SK-N-SH (cell line): ENCODE measurements at regions of chr14 and their contacts with region 1.

Region 1: DNA sequence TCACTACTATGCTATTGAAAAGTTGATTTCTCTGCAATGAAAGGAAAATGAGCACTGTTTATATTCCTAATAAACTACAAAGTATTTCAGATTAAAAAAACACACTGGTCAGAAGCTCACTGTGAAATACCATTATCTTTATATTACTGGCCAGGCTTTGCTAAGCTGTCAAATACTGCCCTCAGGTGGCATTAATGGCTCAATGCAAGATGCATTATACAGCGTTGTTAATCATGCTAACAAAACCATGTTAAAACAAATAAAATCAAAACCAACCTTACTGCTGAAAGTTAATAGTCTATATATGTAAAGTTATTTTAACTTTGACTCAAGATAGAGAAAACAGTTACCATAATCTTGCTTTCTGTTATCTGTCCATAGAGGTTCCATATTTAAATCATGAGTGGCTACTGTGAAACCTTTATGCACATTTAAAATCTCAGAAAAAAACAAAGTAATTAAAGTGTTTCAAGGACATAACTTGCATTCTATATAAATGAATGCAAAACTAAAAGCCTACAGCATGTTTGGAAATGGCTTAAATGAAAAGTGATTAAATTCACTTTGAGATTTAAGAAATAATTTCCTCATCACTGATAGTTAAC is 121.7 kb downstream of the RALGAPA1 start:
- DNase-seq: peak; percentile 46
- H3K4me3 ChIP-seq: no peak overlapping the region
- H3K27ac ChIP-seq: no peak overlapping the region
- H3K4me1 ChIP-seq: no peaks in the 10 kb centered on the region; a peak in 1 of 4 replicates
- H3K27me3 ChIP-seq: no peaks in the 10 kb centered on the region
- CTCF ChIP-seq: peak; percentile 96
- EP300 ChIP-seq: no peak
- RAD21 ChIP-seq: peak; percentile 100

Region 2: GRCh38 chr14:35416108-35416750 is 271.2 kb before region 1 on chr14:
- CTCF ChIA-PET with region 1: interaction called, 22 read pairs
- POLR2A ChIA-PET with region 1: no interaction called
- DNase-seq: no peak
- H3K4me3 ChIP-seq: no peak overlapping the region
- H3K27ac ChIP-seq: no peak overlapping the region
- H3K4me1 ChIP-seq: peaks cover 35% of the 10 kb centered on the region in 2 experiments
- H3K27me3 ChIP-seq: no peaks in the 10 kb centered on the region
- CTCF ChIP-seq: no peak
- EP300 ChIP-seq: no peak
- RAD21 ChIP-seq: no peak

Region 3: GRCh38 chr14:35438910-35439713 is 248.3 kb before region 1 on chr14:
- CTCF ChIA-PET with region 1: interaction called, 10 read pairs
- POLR2A ChIA-PET with region 1: no interaction called
- DNase-seq: peak; percentile 19
- H3K4me3 ChIP-seq: no peak overlapping the region
- H3K27ac ChIP-seq: no peak overlapping the region
- H3K4me1 ChIP-seq: no peaks in the 10 kb centered on the region
- H3K27me3 ChIP-seq: no peaks in the 10 kb centered on the region
- CTCF ChIP-seq: peak; percentile 65
- EP300 ChIP-seq: no peak
- RAD21 ChIP-seq: peak; percentile 37; the same call in 1 of the 2 replicates

Region 4: DNA sequence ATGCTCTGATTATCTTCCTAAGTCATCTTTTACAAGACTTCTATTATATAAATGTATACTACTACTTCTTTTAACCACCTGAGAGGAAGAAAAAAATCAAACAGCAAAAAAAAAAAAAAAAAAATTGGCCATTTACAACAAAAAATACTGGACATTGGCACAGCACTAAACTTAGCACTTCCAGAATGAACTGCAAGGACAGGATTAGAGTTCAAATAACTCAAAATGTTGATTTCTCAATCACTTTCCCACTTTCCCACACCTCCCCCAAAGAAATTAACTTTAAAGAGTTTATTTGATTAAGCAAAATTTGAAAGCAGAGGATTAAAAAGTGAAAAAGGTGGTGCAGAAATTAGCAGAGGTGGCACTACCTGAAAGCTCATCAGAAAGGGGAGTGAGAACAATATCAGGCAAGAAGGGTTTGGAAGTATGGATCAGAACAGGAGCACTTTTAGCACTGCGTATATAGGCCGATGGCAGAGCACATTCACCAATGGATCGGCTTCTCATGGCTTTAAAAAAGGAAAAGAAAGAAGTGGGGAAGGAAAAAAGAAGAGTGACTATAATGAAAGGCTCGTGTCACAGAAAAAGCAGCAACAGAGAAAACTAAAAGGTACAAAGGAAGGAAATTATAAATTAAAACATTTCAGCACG is 12.5 kb after region 1 on chr14:
- CTCF ChIA-PET with region 1: interaction called, 18 read pairs
- POLR2A ChIA-PET with region 1: no interaction called
- DNase-seq: no peak
- H3K4me3 ChIP-seq: no peak overlapping the region
- H3K27ac ChIP-seq: no peak overlapping the region
- H3K4me1 ChIP-seq: peaks cover 5 to 9% of the 10 kb centered on the region in 2 experiments; a peak in 3 of 4 replicates
- H3K27me3 ChIP-seq: no peaks in the 10 kb centered on the region
- CTCF ChIP-seq: no peak
- EP300 ChIP-seq: no peak
- RAD21 ChIP-seq: no peak

Region 5: DNA sequence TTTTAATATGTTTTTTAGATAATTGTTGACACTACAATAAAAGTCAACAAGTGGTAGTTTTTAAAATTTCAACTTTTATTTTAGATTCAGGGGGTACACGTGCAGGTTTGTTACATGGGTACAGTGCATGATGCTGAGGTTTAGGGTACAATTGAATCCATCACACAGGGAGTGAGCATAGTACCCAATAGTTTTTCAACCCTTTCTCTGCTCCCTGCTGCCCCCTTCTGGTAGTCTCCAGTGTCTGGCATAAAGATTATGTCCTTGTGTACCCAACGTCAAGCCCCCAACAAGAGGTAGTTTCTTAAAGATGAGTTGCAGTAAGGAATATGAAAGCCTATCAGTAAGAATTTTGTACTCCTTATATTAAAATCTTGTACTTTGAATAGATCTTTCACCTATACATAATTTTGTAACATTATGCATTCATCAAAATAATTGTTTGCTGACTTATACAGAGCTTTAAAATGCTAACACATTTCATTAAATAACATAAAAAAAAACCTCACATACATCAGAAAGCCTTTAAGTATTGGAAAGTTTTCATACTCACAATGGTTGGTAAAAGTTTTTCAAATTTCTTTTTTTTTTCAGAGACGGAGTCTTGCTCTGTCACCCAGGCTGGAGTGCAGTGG is 127.1 kb after region 1 on chr14:
- CTCF ChIA-PET with region 1: interaction called, 10 read pairs
- POLR2A ChIA-PET with region 1: no interaction called
- DNase-seq: peak; percentile 51
- H3K4me3 ChIP-seq: peak overlapping the region in 1 of 2 experiments; percentile 19; a peak in 1 of 4 replicates
- H3K27ac ChIP-seq: no peak overlapping the region
- H3K4me1 ChIP-seq: no peaks in the 10 kb centered on the region
- H3K27me3 ChIP-seq: no peaks in the 10 kb centered on the region
- CTCF ChIP-seq: peak; percentile 76
- EP300 ChIP-seq: no peak
- RAD21 ChIP-seq: peak; percentile 59

Region 6: GRCh38 chr14:35963209-35963608 is 275.8 kb after region 1 on chr14:
- CTCF ChIA-PET with region 1: no interaction called
- POLR2A ChIA-PET with region 1: no interaction called
- DNase-seq: peak; percentile 3
- H3K4me3 ChIP-seq: no peak overlapping the region
- H3K27ac ChIP-seq: no peak overlapping the region
- H3K4me1 ChIP-seq: no peaks in the 10 kb centered on the region
- H3K27me3 ChIP-seq: 0 out of 2 replicates have a peak, but pooled peaks cover 8% of the 10 kb centered on the region
- CTCF ChIP-seq: peak; percentile 37; the same call in 1 of the 2 replicates
- EP300 ChIP-seq: no peak
- RAD21 ChIP-seq: no peak